A549 (cell line): ENCODE measurements at regions of chr2 and their contacts with region 1.

Region 1: GRCh38 chr2:173027181-173028128 is 48.2 kb upstream of the MAP3K20 start:
- DNase-seq: peak; percentile 46 to 92
- ATAC-seq: peak; percentile 84 to 90
- H3K4me3 ChIP-seq: no peak overlapping the region
- H3K27ac ChIP-seq: peak overlapping the region; percentile 48 to 72
- H3K4me1 ChIP-seq: peaks cover 6% of the 10 kb centered on the region; the same call in 2 of the 3 replicates
- CTCF ChIP-seq: peak; percentile 97
- EP300 ChIP-seq: no peak
- POLR2A ChIP-seq: no peak
- RAD21 ChIP-seq: peak; percentile 99

Region 2: GRCh38 chr2:172905937-172906811 is 121.3 kb before region 1 on chr2:
- CTCF ChIA-PET with region 1: no interaction called
- POLR2A ChIA-PET with region 1: no interaction called
- DNase-seq: no peak
- ATAC-seq: no peak
- H3K4me3 ChIP-seq: no peak overlapping the region
- H3K27ac ChIP-seq: no peak overlapping the region
- H3K4me1 ChIP-seq: no peaks in the 10 kb centered on the region
- CTCF ChIP-seq: no peak
- EP300 ChIP-seq: no peak
- POLR2A ChIP-seq: no peak
- RAD21 ChIP-seq: no peak

Region 3: DNA sequence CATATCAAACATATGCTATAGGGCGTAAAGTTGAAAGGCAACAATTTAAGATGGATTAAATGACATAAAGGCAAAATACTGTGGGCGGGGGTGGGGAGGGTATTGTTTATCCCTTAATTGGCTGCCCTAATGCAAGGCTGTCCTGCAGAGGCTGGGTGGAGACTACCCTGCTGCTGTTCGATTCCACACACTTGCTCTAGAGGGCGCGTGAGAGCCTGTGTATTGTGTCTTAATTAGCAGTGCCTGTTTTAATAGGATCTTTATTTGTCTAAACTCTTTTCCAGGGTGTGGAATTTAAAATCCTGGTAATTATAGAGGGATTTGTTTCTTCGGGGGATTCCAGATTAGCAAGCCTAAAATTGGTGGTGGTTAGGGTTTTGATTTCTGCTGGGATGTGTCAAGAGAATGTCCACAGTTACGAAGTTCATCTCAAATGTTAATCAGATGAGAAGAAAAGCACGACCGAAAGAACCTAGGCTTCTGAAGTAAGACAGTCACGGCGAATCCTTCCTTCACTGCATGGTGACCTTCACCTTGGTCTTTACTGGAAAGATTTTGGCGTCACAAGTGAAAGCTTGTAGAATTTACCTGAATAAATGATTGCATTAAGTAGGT is 55.3 kb before region 1 on chr2:
- CTCF ChIA-PET with region 1: interaction called, 31 read pairs
- POLR2A ChIA-PET with region 1: no interaction called
- DNase-seq: peak; percentile 52 to 53
- ATAC-seq: peak; percentile 70 to 86; a peak in 4 of 6 replicates
- H3K4me3 ChIP-seq: no peak overlapping the region
- H3K27ac ChIP-seq: no peak overlapping the region
- H3K4me1 ChIP-seq: peaks cover 21% of the 10 kb centered on the region
- CTCF ChIP-seq: peak; percentile 77
- EP300 ChIP-seq: no peak
- POLR2A ChIP-seq: no peak
- RAD21 ChIP-seq: peak; percentile 61 to 68

Region 4: GRCh38 chr2:173043476-173043875 is 16.0 kb after region 1 on chr2:
- CTCF ChIA-PET with region 1: interaction called, 28 read pairs
- POLR2A ChIA-PET with region 1: no interaction called
- DNase-seq: no peak
- ATAC-seq: no peak; a peak in 1 of 6 replicates
- H3K4me3 ChIP-seq: no peak overlapping the region
- H3K27ac ChIP-seq: peak overlapping the region; percentile 20 to 59; a peak in 4 of 6 replicates
- H3K4me1 ChIP-seq: peaks cover 25% of the 10 kb centered on the region
- CTCF ChIP-seq: no peak
- EP300 ChIP-seq: no peak
- POLR2A ChIP-seq: no peak
- RAD21 ChIP-seq: no peak

Region 5: GRCh38 chr2:173075781-173076580 is 48.5 kb after region 1 on chr2 and contains the start of gene MAP3K20:
- CTCF ChIA-PET with region 1: interaction called, 34 read pairs
- POLR2A ChIA-PET with region 1: interaction called, 4 read pairs
- DNase-seq: peak in 1 of 2 experiments; percentile 77
- ATAC-seq: peak; percentile 80 to 84
- H3K4me3 ChIP-seq: peak within 1 kb of the TSS; percentile 88
- H3K27ac ChIP-seq: peak within 1 kb of the TSS; percentile 94 to 98
- H3K4me1 ChIP-seq: peaks cover 36% of the 10 kb centered on the region
- CTCF ChIP-seq: peak; percentile 48; the same call in 2 of the 3 replicates
- EP300 ChIP-seq: no peak
- POLR2A ChIP-seq: peak; percentile 60
- RAD21 ChIP-seq: peak; percentile 60 to 76
- polyA plus RNA-seq, gene MAP3K20: 76.7 and 80.7 TPM in 2 replicates

Region 6: GRCh38 chr2:173171924-173172643 is 144.6 kb after region 1 on chr2:
- CTCF ChIA-PET with region 1: interaction called, 12 read pairs
- POLR2A ChIA-PET with region 1: no interaction called
- DNase-seq: peak in 1 of 2 experiments; percentile 50
- ATAC-seq: peak; percentile 56 to 70; a peak in 3 of 6 replicates
- H3K4me3 ChIP-seq: no peak overlapping the region
- H3K27ac ChIP-seq: peak overlapping the region in 1 of 2 experiments; percentile 64; a peak in 3 of 6 replicates
- H3K4me1 ChIP-seq: peaks cover 43% of the 10 kb centered on the region
- CTCF ChIP-seq: no peak
- EP300 ChIP-seq: no peak
- POLR2A ChIP-seq: no peak
- RAD21 ChIP-seq: no peak

Region 7: GRCh38 chr2:173210270-173211196 is 183.1 kb after region 1 on chr2:
- CTCF ChIA-PET with region 1: interaction called, 395 read pairs
- POLR2A ChIA-PET with region 1: interaction called, 7 read pairs
- DNase-seq: peak; percentile 68 to 92
- ATAC-seq: peak; percentile 96 to 99
- H3K4me3 ChIP-seq: no peak overlapping the region
- H3K27ac ChIP-seq: peak overlapping the region; percentile 55 to 75
- H3K4me1 ChIP-seq: peaks cover 15% of the 10 kb centered on the region
- CTCF ChIP-seq: peak; percentile 96
- EP300 ChIP-seq: peak in 1 of 2 experiments; percentile 21; a peak in 1 of 5 replicates
- POLR2A ChIP-seq: no peak
- RAD21 ChIP-seq: peak; percentile 97 to 98